GM10248 (cell line): ENCODE measurements at regions of chr10 and their contacts with region 1.

Region 1: GRCh38 chr10:5694573-5694972 is 9.9 kb downstream of the TASOR2 start:
- DNase-seq: no peak
- CTCF ChIP-seq: no peak

Region 2: DNA sequence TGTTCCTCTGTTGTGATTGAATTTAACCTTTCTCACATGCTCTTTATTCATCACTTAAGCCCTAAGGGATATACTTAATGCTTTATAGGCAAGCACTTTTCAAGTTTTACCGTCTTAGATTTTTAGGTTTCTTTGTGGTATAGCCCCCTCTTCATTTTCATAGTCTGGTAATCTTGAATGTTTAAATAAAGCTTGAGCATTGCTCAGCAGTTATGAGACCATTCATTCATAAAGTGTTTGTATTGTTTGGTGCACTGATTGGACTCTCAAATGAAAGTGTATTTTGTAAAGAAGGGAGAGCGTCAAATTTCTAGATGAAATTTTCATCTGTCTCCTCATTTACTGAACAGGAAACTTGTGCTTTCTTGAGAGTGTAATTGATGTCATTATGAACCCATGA is 15.3 kb after region 1 on chr10:
- CTCF ChIA-PET with region 1: interaction called, 17 read pairs
- POLR2A ChIA-PET with region 1: no interaction called
- DNase-seq: no peak
- CTCF ChIP-seq: no peak